ENCODE measurements at regions of chr15 and their contacts with region 1.

Region 1: DNA sequence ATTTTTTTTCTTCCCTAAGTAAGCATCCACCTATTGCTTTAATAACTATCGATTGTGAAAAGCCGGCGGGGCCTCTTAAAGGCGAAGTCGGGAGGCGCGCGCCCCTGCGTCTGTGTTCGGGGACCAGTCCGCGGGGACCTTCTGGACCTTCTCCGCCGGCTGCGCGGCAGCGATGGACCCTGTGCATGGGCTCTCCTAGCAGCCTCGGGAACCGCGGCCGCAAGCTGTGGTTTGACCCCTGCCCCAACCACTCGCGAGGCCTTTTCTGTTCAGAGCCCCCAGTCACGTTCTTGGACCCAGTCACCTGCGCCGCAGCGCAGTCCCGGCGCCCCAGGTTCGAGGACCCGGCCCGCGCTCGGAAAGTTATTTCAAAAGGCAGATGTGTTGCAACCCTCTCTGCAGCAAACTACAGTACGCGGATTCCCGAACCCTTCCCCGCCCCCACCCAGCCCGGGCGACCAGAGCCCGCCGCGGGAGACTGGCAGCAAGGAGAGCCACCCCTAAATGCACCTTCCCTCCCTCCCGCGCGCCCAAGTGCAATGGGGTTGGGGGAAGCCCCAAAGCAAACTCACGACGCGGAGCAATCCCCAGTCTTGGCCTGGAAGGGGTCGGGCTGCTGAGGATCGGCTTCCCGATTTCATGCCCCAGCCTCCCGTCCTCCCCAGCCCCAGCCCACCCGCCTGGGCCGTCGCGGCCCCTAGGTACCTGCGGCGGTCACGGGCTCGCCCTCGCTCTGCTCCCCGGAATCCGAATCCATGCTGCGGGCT is 684 bp downstream of the TNFAIP8L3 start:
- DNase-seq: peak in 1 of 2 donors; percentile 81
- H3K4me3 ChIP-seq: peak overlapping the region; percentile 67 to 92
- H3K27ac ChIP-seq: peak overlapping the region; percentile 92 to 95
- H3K4me1 ChIP-seq: peaks cover 0 to 27% of the 10 kb centered on the region in 2 donors
- H3K27me3 ChIP-seq: no peaks in the 10 kb centered on the region
- CTCF ChIP-seq: no peak

Region 2: GRCh38 chr15:50354838-50355618 is 739.0 kb before region 1 on chr15 and contains the start of gene GABPB1:
- intact Hi-C with region 1: loop called (anchors 10 kb)
- DNase-seq: peak; percentile 31 to 90
- H3K4me3 ChIP-seq: peak within 1 kb of the TSS; percentile 95 to 99
- H3K27ac ChIP-seq: peak within 1 kb of the TSS; percentile 99 to 100
- H3K4me1 ChIP-seq: peaks cover 12 to 36% of the 10 kb centered on the region in 2 donors
- H3K27me3 ChIP-seq: no peaks in the 10 kb centered on the region
- CTCF ChIP-seq: no peak
- total RNA-seq, gene GABPB1: 10.9 TPM

Region 3: DNA sequence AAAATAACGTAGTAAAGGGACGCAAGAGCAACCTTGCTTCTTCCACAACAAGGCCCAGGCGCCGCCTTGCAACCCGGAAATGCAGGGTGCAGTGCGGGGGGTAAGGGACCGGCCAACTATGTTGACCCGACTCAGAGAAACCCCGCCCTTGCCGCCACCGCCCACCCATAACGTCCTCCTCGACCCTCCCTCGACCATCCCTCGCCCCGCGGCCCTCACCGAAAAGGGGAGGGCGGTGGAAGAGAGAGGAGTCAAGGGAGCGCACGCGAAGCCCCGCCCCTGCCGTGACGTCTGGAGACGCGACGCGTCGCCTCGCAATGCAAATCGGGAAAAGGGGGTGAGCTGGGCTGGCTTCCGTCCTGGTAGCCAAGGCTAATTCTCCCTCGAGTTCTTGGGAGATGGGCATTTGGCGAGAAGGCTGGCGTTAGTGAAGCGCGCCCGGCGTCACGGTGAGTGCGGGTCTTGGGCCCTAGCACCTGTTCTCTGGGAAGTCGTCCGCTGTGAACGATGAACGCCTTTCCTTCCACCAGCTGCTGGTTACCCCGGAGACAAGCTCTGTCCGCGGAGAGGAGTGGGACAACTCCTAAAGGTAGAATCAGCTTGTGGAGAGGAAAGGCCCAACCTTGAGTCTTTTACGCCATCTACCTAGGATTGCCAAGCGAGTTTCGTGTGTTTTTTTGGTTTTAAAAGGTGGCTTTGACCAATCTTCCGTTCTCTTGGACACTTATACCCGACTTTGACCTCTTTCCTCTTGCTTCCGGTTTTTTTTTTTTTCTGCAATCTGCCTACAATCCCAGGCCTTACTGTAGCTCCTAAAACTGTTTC is 669.7 kb before region 1 on chr15 and contains the start of gene USP8:
- intact Hi-C with region 1: loop called (anchors 10 kb)
- DNase-seq: peak; percentile 80 to 96
- H3K4me3 ChIP-seq: peak within 1 kb of the TSS; percentile 80 to 84
- H3K27ac ChIP-seq: peak within 1 kb of the TSS; percentile 86 to 90
- H3K4me1 ChIP-seq: peaks cover 0 to 8% of the 10 kb centered on the region in 2 donors
- H3K27me3 ChIP-seq: no peaks in the 10 kb centered on the region
- CTCF ChIP-seq: no peak
- total RNA-seq, gene USP8: 34.5 TPM

Region 4: GRCh38 chr15:50765195-50765973 is 328.6 kb before region 1 on chr15 and contains the start of gene SPPL2A:
- intact Hi-C with region 1: loop called (anchors 10 kb)
- DNase-seq: peak; percentile 39 to 90
- H3K4me3 ChIP-seq: peak within 1 kb of the TSS; percentile 93 to 96
- H3K27ac ChIP-seq: peak within 1 kb of the TSS; percentile 99 to 100
- H3K4me1 ChIP-seq: peaks cover 0 to 17% of the 10 kb centered on the region in 2 donors
- H3K27me3 ChIP-seq: no peaks in the 10 kb centered on the region
- CTCF ChIP-seq: no peak
- total RNA-seq, gene SPPL2A: 785 TPM

Region 5: DNA sequence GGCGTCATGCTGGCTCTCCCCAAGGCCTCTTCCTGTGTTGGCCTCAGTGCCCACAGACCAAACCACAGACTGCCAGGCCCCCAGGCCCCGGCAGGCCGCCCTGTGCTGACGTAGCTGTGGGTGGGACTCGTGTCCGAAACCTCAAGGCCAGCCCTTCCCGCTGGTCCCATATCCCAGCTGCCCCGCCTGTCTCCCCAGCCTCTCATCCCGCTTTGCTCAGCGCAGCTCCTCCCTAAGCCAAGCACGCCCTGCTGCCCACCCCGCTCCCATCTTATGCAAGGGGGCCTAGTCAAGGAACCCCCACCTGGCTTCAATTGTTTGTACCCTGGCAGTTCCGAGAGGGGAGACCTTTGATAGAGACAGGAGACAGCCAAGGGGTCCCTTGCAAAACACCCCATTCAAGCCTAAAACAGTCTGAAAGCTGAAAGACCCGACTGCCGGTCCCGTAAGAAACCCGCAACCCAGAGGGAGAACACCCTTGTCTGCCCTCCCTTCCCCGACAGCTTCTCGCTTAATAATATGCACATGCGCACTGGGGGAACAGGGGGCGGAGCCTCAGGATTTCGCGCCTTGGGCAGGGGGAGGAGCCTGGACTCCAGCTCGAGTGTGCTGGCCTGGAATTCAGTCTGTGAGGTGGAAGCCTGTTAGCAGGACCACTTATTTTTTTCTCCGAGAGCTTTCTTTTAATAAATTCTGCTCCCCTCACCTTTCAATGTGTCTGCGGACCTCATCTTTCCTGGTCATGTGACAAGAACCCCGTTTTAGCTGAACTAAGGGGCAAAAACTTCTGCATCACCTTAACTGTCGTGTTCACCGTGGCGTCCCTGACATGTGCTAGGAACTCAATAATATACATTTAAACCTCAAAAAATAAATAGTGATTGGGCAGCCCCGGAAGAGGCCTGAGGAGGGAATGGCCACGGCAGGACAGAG is 16.5 kb before region 1 on chr15:
- intact Hi-C with region 1: loop called (anchors 2 kb)
- DNase-seq: peak; percentile 50 to 88
- H3K4me3 ChIP-seq: peak overlapping the region in 1 of 2 donors; percentile 54
- H3K27ac ChIP-seq: peak overlapping the region; percentile 81 to 89
- H3K4me1 ChIP-seq: peaks cover 6 to 22% of the 10 kb centered on the region in 2 donors
- H3K27me3 ChIP-seq: no peaks in the 10 kb centered on the region
- CTCF ChIP-seq: no peak

Region 6: GRCh38 chr15:51132384-51133139 is 38.5 kb after region 1 on chr15:
- intact Hi-C with region 1: loop called (anchors 5 kb)
- DNase-seq: peak in 1 of 2 donors; percentile 81
- H3K4me3 ChIP-seq: no peak overlapping the region
- H3K27ac ChIP-seq: peak overlapping the region; percentile 58 to 71
- H3K4me1 ChIP-seq: peaks cover 4 to 14% of the 10 kb centered on the region in 2 donors
- H3K27me3 ChIP-seq: no peaks in the 10 kb centered on the region
- CTCF ChIP-seq: peak; percentile 83 to 97 (median 93)

Region 7: GRCh38 chr15:51243759-51244158 is 149.7 kb after region 1 on chr15:
- intact Hi-C with region 1: no loop called
- DNase-seq: no peak
- H3K4me3 ChIP-seq: no peak overlapping the region
- H3K27ac ChIP-seq: no peak overlapping the region
- H3K4me1 ChIP-seq: no peaks in the 10 kb centered on the region
- H3K27me3 ChIP-seq: no peaks in the 10 kb centered on the region
- CTCF ChIP-seq: no peak